WTC11 (cell line): ENCODE measurements at regions of chr2 and their contacts with region 1.

Region 1: DNA sequence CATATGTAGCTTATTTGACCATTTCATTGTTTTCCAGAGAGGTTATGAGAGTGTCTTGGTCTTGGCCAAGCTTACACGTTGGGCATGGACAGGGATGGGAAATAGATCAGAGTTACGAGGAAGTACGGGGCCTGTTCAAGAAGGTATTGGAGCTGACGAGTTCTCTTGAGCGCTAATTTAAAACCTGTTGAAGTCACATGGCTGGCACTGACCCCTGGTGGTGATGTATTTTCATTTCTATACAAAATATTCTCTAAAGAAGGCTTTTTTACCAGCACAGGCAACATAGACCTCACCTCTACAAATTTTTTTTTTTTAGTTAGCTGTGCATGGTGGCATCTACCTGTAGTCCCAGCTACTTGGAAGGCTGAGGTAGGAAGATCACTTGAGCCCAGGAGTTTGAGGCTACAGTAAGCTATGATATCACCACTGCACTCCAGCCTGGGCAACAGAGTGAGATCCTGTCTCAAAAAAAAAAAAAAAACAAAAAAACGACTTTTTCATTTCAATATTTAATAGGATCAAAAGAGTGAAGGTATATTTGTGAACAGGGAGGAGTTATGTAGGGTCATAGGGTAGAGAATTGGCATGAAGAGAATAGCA is 19.6 kb downstream of the UGP2 start:
- DNase-seq: no peak
- ATAC-seq: peak; percentile 73
- H3K4me3 Mint-ChIP-seq: no peak overlapping the region
- H3K27ac Mint-ChIP-seq: peak overlapping the region; percentile 18; the same call in 1 of the 2 replicates
- H3K4me1 Mint-ChIP-seq: peaks cover 67% of the 10 kb centered on the region
- H3K27me3 Mint-ChIP-seq: no peaks in the 10 kb centered on the region
- CTCF ChIP-seq: peak; percentile 47

Region 2: GRCh38 chr2:63692002-63692606 is 169.2 kb before region 1 on chr2:
- CTCF ChIA-PET with region 1: interaction called, 10 read pairs
- POLR2A ChIA-PET with region 1: no interaction called
- DNase-seq: no peak
- ATAC-seq: peak; percentile 39
- H3K4me3 Mint-ChIP-seq: no peak overlapping the region
- H3K27ac Mint-ChIP-seq: no peak overlapping the region
- H3K4me1 Mint-ChIP-seq: peaks cover 19% of the 10 kb centered on the region
- H3K27me3 Mint-ChIP-seq: no peaks in the 10 kb centered on the region
- CTCF ChIP-seq: no peak

Region 3: GRCh38 chr2:63698825-63699548 is 162.3 kb before region 1 on chr2:
- CTCF ChIA-PET with region 1: interaction called, 34 read pairs
- POLR2A ChIA-PET with region 1: no interaction called
- DNase-seq: peak; percentile 52
- ATAC-seq: peak; percentile 99
- H3K4me3 Mint-ChIP-seq: no peak overlapping the region
- H3K27ac Mint-ChIP-seq: peak overlapping the region; percentile 8; the same call in 1 of the 2 replicates
- H3K4me1 Mint-ChIP-seq: peaks cover 19% of the 10 kb centered on the region
- H3K27me3 Mint-ChIP-seq: no peaks in the 10 kb centered on the region
- CTCF ChIP-seq: no peak

Region 4: GRCh38 chr2:63721082-63721424 is 140.3 kb before region 1 on chr2:
- CTCF ChIA-PET with region 1: no interaction called
- POLR2A ChIA-PET with region 1: no interaction called
- DNase-seq: no peak
- ATAC-seq: no peak
- H3K4me3 Mint-ChIP-seq: no peak overlapping the region
- H3K27ac Mint-ChIP-seq: no peak overlapping the region
- H3K4me1 Mint-ChIP-seq: no peaks in the 10 kb centered on the region
- H3K27me3 Mint-ChIP-seq: no peaks in the 10 kb centered on the region; the same call in 1 of the 2 replicates
- CTCF ChIP-seq: no peak

Region 5: GRCh38 chr2:63875131-63875527 is 13.8 kb after region 1 on chr2:
- CTCF ChIA-PET with region 1: interaction called, 6 read pairs
- POLR2A ChIA-PET with region 1: interaction called, 13 read pairs
- DNase-seq: no peak
- ATAC-seq: no peak
- H3K4me3 Mint-ChIP-seq: no peak overlapping the region
- H3K27ac Mint-ChIP-seq: peak overlapping the region; percentile 78
- H3K4me1 Mint-ChIP-seq: peaks cover 85% of the 10 kb centered on the region
- H3K27me3 Mint-ChIP-seq: no peaks in the 10 kb centered on the region
- CTCF ChIP-seq: no peak